Activated naive CD4-positive, alpha-beta T cell treated with anti-CD3 and anti-CD28 coated beads for 36 hours (primary cell): ENCODE measurements at regions of chr10 and their contacts with region 1.

Region 1: GRCh38 chr10:32239770-32240169 is 107.2 kb downstream of the EPC1 start:
- DNase-seq: no peak
- H3K4me3 Mint-ChIP-seq: no peak overlapping the region
- H3K27ac Mint-ChIP-seq: no peak overlapping the region
- H3K4me1 Mint-ChIP-seq: peaks cover 9% of the 10 kb centered on the region
- H3K27me3 Mint-ChIP-seq: no peaks in the 10 kb centered on the region

Region 2: GRCh38 chr10:31896947-31897384 is 342.8 kb before region 1 on chr10:
- CTCF ChIA-PET with region 1: no interaction called
- intact Hi-C with region 1: no loop called
- DNase-seq: no peak
- H3K4me3 Mint-ChIP-seq: no peak overlapping the region
- H3K27ac Mint-ChIP-seq: no peak overlapping the region
- H3K4me1 Mint-ChIP-seq: peaks cover 38% of the 10 kb centered on the region
- H3K27me3 Mint-ChIP-seq: no peaks in the 10 kb centered on the region

Region 3: DNA sequence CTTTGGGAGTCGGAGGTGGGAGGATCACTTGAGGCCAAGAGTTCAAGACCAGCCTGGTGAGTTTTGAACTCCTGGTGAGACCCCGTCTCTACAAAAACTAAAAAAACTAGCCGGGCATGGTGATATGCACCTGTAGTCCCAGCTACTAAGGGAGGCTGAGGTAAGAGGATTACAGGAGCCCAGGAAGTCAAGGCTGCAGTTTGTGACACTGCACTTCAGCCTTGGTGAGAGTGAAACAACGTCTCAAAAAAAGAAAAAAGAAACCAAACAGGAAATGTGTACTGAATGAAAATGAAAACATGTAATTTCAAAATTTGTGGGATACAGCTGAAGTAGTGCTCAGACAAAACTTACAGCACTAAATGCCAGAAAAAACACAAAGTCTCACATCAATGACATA is 318.7 kb before region 1 on chr10:
- CTCF ChIA-PET with region 1: no interaction called
- intact Hi-C with region 1: loop called (anchors 1 kb)
- DNase-seq: peak; percentile 45
- H3K4me3 Mint-ChIP-seq: peak overlapping the region; percentile 4
- H3K27ac Mint-ChIP-seq: peak overlapping the region; percentile 77
- H3K4me1 Mint-ChIP-seq: peaks cover 54% of the 10 kb centered on the region
- H3K27me3 Mint-ChIP-seq: no peaks in the 10 kb centered on the region

Region 4: DNA sequence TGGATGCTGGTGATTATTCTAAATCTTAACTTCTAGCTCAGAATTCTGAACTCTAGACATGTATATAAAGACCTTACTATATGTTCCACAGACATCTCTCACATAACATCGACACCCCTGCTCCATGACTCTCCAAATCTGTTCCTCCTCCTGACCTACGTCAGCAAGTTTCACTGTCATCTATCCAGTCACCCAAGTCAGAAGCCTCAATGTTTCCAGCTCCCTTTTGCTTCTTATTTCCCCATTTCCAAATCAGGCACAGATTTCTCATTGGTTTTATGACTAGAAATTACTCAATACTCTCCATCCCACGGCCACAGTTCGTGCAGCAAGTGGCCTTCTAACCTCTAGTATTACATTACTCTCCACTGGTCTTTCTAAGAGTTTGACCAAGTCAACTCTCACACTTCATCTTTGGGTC is 78.7 kb after region 1 on chr10:
- CTCF ChIA-PET with region 1: interaction called, 4 read pairs
- intact Hi-C with region 1: loop called (anchors 1 kb)
- DNase-seq: peak; percentile 45
- H3K4me3 Mint-ChIP-seq: no peak overlapping the region
- H3K27ac Mint-ChIP-seq: peak overlapping the region; percentile 60
- H3K4me1 Mint-ChIP-seq: peaks cover 75% of the 10 kb centered on the region
- H3K27me3 Mint-ChIP-seq: no peaks in the 10 kb centered on the region

Region 5: GRCh38 chr10:32413513-32413912 is 173.7 kb after region 1 on chr10:
- CTCF ChIA-PET with region 1: no interaction called
- intact Hi-C with region 1: loop called (anchors 1 kb)
- DNase-seq: peak; percentile 65
- H3K4me3 Mint-ChIP-seq: no peak overlapping the region
- H3K27ac Mint-ChIP-seq: no peak overlapping the region
- H3K4me1 Mint-ChIP-seq: peaks cover 9% of the 10 kb centered on the region
- H3K27me3 Mint-ChIP-seq: no peaks in the 10 kb centered on the region

Region 6: GRCh38 chr10:33008499-33009243 is 768.9 kb after region 1 on chr10:
- CTCF ChIA-PET with region 1: no interaction called
- intact Hi-C with region 1: loop called (anchors 5 kb)
- DNase-seq: peak; percentile 81
- H3K4me3 Mint-ChIP-seq: peak overlapping the region; percentile 52
- H3K27ac Mint-ChIP-seq: peak overlapping the region; percentile 9
- H3K4me1 Mint-ChIP-seq: peaks cover 34% of the 10 kb centered on the region
- H3K27me3 Mint-ChIP-seq: peaks cover 9% of the 10 kb centered on the region

Region 7: DNA sequence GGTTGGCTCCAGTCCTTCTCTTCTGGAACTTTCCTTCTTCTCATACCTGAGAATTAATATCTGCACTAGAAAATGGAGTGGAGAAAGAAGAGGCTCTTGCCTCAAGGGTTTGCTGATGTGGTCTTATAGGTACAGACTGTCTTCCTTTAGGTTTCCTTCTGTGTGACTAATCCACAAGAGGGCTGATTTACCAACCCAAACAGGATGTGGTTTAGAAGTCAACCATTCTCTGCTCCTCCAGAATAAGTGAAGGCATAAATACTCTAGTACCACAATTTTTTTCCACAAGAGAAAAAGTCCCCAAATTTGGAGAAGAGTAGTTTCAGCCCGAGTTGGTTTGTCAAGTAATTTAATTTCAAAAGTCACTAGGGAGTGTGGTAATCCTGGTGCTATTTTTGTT is 1008.9 kb after region 1 on chr10:
- CTCF ChIA-PET with region 1: no interaction called
- intact Hi-C with region 1: loop called (anchors 10 kb)
- DNase-seq: peak; percentile 49
- H3K4me3 Mint-ChIP-seq: no peak overlapping the region
- H3K27ac Mint-ChIP-seq: no peak overlapping the region
- H3K4me1 Mint-ChIP-seq: peaks cover 75% of the 10 kb centered on the region
- H3K27me3 Mint-ChIP-seq: no peaks in the 10 kb centered on the region